ENCODE measurements at regions of chr2 and their contacts with region 1.

Region 1: DNA sequence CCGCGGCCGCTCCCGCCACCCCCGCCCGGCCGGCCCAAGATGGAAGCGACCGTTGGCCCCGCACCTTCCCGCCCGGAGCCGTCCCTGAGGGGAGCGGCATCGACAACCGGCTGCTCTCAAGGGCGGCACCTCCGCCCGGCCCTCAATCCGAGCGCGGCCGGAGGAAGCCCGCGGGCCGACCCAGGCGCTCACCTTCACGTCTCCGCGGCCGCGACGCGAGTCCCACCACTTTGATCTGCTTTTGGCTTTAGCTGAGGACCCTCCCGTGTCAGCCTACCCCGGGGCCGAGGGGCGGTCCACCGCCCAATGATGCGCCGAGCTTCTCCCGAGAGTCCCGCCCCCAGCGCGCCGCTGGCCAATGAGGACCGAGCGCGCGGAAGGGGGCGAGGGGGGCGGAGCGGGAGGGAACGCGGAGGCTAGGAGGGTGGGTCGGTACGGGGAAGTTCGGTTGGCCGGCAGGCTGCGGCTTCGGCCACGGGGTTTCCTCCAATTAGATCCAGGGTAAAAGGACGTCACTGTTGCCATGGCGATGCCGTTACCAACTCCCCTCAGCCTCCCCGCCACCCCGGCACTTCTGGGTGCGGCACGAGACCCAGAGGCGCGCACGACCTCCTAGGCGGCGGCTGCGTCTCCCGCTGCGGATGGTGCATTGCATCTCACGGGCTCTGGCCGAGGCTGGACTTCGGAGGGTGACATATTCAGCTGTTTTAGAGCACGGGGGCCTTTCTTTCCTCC is at the start of gene YWHAQ:
- DNase-seq: peak; percentile 99
- ATAC-seq: peak; percentile 94 to 98 (median 96)
- H3K4me3 ChIP-seq: peak within 1 kb of the TSS; percentile 98
- H3K27ac ChIP-seq: peak within 1 kb of the TSS; percentile 96
- H3K4me1 ChIP-seq: peaks cover 43% of the 10 kb centered on the region
- H3K27me3 ChIP-seq: no peaks in the 10 kb centered on the region
- CTCF ChIP-seq: no peak
- total RNA-seq, gene YWHAQ: 53.5 to 65.9 (median 59.1) TPM

Region 2: GRCh38 chr2:8030573-8031303 is 1600.2 kb before region 1 on chr2:
- intact Hi-C with region 1: no loop called
- DNase-seq: no peak
- ATAC-seq: no peak
- H3K4me3 ChIP-seq: no peak overlapping the region
- H3K27ac ChIP-seq: no peak overlapping the region
- H3K4me1 ChIP-seq: no peaks in the 10 kb centered on the region
- H3K27me3 ChIP-seq: peaks cover 0 to 9% (median 2%) of the 10 kb centered on the region in 3 donors
- CTCF ChIP-seq: no peak

Region 3: GRCh38 chr2:9484533-9484932 is 146.4 kb before region 1 on chr2:
- intact Hi-C with region 1: loop called in 1 of 2 experiments (anchors 5 kb)
- DNase-seq: no peak
- ATAC-seq: peak in 3 of 4 donors; percentile 36 to 52 (median 52)
- H3K4me3 ChIP-seq: no peak overlapping the region
- H3K27ac ChIP-seq: peak overlapping the region; percentile 16
- H3K4me1 ChIP-seq: no peaks in the 10 kb centered on the region
- H3K27me3 ChIP-seq: no peaks in the 10 kb centered on the region
- CTCF ChIP-seq: no peak

Region 4: GRCh38 chr2:9555297-9556141 is 75.4 kb before region 1 on chr2 and contains the start of gene ADAM17:
- intact Hi-C with region 1: loop called (anchors 5 kb)
- DNase-seq: peak; percentile 98
- ATAC-seq: peak; percentile 93 to 97 (median 94)
- H3K4me3 ChIP-seq: peak within 1 kb of the TSS; percentile 93
- H3K27ac ChIP-seq: peak within 1 kb of the TSS; percentile 96
- H3K4me1 ChIP-seq: peaks cover 47% of the 10 kb centered on the region
- H3K27me3 ChIP-seq: no peaks in the 10 kb centered on the region
- CTCF ChIP-seq: peak; percentile 25
- total RNA-seq, gene ADAM17: 12.9 to 36.3 (median 16.1) TPM

Region 5: DNA sequence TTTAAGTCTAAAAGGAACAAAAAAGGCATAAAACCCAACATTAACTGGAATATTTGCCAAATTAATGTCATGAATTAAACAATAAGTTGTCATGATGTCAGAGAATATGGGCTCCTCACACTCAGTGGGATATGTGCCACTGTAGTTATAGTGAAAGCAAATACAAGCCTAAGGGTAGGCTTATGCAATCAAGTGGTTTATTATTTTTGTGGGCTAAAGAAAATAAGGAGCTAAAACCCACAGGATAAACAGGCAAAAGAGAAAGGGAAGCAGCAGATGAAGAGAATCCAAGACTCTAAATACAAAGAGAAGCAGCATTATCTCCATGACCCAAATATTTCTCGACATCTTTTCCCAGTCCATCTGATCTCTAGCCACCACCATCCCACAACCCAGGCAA is 17.6 kb before region 1 on chr2:
- intact Hi-C with region 1: loop called in 1 of 2 experiments (anchors 2 kb)
- DNase-seq: no peak
- ATAC-seq: peak in 1 of 4 donors; percentile 45
- H3K4me3 ChIP-seq: no peak overlapping the region
- H3K27ac ChIP-seq: no peak overlapping the region
- H3K4me1 ChIP-seq: peaks cover 64% of the 10 kb centered on the region
- H3K27me3 ChIP-seq: no peaks in the 10 kb centered on the region
- CTCF ChIP-seq: no peak

Region 6: DNA sequence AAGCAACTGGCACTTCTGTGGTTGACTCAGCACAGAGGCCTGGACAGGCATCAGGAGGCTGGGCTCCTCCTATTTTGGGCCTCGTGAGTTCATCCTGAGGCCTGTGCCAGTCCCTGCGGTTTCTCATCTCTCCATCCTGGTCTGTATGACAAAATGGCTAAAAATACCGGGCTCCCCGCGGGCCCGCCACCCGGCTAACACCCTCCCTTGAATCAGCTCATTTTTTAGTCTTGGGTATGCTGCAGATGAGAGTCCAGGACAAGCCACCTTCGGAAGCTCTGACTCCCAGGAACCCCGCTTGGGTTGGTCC is 62.2 kb after region 1 on chr2:
- intact Hi-C with region 1: loop called (anchors 2 to 5 kb)
- DNase-seq: peak; percentile 83 to 92
- ATAC-seq: peak; percentile 94 to 98 (median 96)
- H3K4me3 ChIP-seq: peak overlapping the region; percentile 54
- H3K27ac ChIP-seq: peak overlapping the region; percentile 96
- H3K4me1 ChIP-seq: peaks cover 19% of the 10 kb centered on the region
- H3K27me3 ChIP-seq: no peaks in the 10 kb centered on the region
- CTCF ChIP-seq: no peak

Region 7: DNA sequence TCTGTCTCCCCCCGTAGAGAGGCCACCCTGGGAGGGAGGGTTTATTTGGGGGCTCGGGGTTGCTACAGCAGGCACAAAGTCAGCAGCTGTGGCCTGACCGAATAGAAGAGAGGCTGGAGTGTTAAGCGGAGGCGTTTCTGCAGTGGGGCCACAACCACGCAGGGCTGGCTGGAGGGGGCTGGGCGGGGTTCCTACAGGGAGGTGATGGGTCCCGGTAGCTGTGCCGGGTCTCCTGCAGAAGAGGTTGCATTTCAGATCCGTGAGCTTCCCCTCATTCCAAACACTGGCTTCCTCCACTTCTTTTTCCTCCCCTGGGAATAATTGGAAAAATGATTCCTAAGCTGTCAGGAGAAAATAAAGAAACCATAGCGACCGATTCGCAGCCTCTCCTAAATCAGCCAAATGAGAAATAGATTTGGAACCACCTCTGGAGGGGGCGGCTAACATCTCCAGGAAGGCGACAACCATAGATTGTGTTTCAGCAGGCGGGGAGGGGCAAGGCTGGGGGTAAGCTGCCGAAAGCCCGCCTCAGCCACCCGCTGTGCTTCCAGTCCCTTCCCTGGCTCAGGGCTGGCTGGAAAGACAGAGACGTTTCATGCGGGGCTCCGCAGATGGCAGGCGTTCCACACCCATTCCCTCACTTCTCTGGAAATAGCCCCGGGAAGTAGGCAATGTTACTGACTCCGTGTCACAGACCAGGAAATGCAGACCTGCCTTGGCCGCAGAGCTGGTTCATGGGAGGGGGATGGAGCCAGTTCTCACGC is 126.8 kb after region 1 on chr2:
- intact Hi-C with region 1: loop called (anchors 5 kb)
- DNase-seq: peak; percentile 73 to 87
- ATAC-seq: peak; percentile 82 to 89 (median 84)
- H3K4me3 ChIP-seq: peak overlapping the region; percentile 57
- H3K27ac ChIP-seq: peak overlapping the region; percentile 95
- H3K4me1 ChIP-seq: peaks cover 46% of the 10 kb centered on the region
- H3K27me3 ChIP-seq: no peaks in the 10 kb centered on the region
- CTCF ChIP-seq: no peak